ENCODE measurements at regions of chr3 and their contacts with region 1.

Region 1: DNA sequence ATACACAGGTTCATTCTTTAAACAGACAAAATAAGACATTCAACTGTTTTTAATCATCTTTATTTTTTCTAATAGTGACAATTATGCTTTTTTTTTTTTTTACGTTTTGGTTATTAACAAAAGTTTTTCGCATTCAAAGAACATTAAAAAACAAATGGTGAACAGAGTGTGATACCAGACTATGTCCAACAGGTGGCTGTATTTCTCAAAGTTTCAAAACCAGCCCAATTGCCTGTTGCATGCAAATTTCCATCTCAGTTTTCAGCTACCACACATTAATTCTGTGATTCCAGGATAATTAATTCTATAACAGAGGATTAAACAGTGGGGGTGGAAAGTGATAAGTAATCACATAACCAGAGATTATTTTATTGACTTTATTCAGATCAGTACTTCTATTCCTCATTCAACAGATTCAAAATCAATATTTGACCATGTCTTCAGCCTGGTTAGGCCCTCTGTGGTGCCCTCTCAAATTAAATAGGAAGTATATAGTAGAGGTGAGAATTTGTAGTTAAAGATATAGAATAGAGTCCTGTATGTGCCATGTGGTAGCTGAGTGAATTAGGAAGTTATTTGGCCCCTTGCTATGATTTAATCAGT is 122.2 kb upstream of the DCBLD2 start:
- DNase-seq: peak; percentile 10 to 26 (median 20)
- ATAC-seq: no peak
- H3K4me3 ChIP-seq: no peak overlapping the region
- H3K27ac ChIP-seq: no peak overlapping the region
- H3K4me1 ChIP-seq: no peaks in the 10 kb centered on the region
- H3K27me3 ChIP-seq: no peaks in the 10 kb centered on the region
- CTCF ChIP-seq: peak; percentile 19 to 65 (median 45); a peak in 5 of 6 replicates
- EP300 ChIP-seq: no peak
- POLR2A ChIP-seq: no peak
- RAD21 ChIP-seq: peak; percentile 46 to 59

Region 2: GRCh38 chr3:99172736-99173657 is 149.3 kb after region 1 on chr3:
- CTCF ChIA-PET with region 1: no interaction called
- POLR2A ChIA-PET with region 1: no interaction called
- in situ Hi-C with region 1: no loop called
- intact Hi-C with region 1: loop called (anchors 5 kb)
- DNase-seq: peak; percentile 4 to 37 (median 8)
- ATAC-seq: peak; percentile 62; the same call in 2 of the 3 replicates
- H3K4me3 ChIP-seq: no peak overlapping the region
- H3K27ac ChIP-seq: no peak overlapping the region
- H3K4me1 ChIP-seq: no peaks in the 10 kb centered on the region
- H3K27me3 ChIP-seq: no peaks in the 10 kb centered on the region
- CTCF ChIP-seq: peak; percentile 38 to 50 (median 47)
- EP300 ChIP-seq: no peak
- POLR2A ChIP-seq: no peak
- RAD21 ChIP-seq: peak; percentile 20 to 47; a peak in 3 of 4 replicates

Region 3: DNA sequence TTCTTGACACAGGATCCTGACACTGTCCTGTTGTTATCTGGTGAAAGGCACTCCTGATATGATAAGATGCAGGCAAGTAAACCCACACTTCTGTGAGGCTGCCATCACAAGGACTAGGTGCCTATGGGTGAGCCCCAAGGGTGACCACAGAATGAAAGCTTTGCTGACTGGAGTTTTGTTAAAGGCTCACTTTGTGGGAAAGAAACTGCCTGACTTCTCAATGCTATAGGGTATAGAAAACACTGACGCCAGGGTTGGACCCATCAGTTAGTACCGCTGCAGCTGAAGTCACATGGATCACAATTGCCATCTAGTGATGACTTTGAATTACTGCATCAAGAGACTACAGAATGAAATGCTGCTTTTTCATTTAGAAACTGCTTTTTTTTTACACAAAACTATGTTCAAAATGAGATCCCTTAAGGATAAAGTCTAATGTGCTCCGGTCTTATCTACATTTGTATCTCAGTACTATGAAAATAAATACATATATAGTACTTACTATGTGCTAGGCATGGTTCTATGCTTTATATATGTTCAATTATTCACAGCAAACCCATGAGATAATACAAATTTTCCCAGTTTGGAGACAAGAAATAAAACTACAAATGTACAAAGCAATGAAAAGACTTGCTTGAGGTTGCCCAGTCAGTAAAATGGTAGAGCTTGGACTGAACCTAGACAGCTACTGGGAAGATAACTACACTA is 729.7 kb after region 1 on chr3:
- CTCF ChIA-PET with region 1: interaction called, 3 read pairs
- POLR2A ChIA-PET with region 1: no interaction called
- in situ Hi-C with region 1: no loop called
- intact Hi-C with region 1: loop called (anchors 1 kb)
- DNase-seq: peak; percentile 5 to 44 (median 14)
- ATAC-seq: peak; percentile 80
- H3K4me3 ChIP-seq: no peak overlapping the region
- H3K27ac ChIP-seq: no peak overlapping the region
- H3K4me1 ChIP-seq: no peaks in the 10 kb centered on the region
- H3K27me3 ChIP-seq: no peaks in the 10 kb centered on the region
- CTCF ChIP-seq: peak; percentile 51 to 78 (median 63)
- EP300 ChIP-seq: no peak
- POLR2A ChIP-seq: no peak
- RAD21 ChIP-seq: peak; percentile 78 to 80